ENCODE measurements at regions of chrX and their contacts with region 1.

Region 1: GRCh38 chrX:41055740-41056139 is 29.5 kb upstream of the USP9X start:
- DNase-seq: no peak
- H3K4me3 ChIP-seq: no peak overlapping the region
- H3K27ac ChIP-seq: no peak overlapping the region
- H3K4me1 ChIP-seq: no peaks in the 10 kb centered on the region
- H3K27me3 ChIP-seq: no peaks in the 10 kb centered on the region
- CTCF ChIP-seq: no peak

Region 2: DNA sequence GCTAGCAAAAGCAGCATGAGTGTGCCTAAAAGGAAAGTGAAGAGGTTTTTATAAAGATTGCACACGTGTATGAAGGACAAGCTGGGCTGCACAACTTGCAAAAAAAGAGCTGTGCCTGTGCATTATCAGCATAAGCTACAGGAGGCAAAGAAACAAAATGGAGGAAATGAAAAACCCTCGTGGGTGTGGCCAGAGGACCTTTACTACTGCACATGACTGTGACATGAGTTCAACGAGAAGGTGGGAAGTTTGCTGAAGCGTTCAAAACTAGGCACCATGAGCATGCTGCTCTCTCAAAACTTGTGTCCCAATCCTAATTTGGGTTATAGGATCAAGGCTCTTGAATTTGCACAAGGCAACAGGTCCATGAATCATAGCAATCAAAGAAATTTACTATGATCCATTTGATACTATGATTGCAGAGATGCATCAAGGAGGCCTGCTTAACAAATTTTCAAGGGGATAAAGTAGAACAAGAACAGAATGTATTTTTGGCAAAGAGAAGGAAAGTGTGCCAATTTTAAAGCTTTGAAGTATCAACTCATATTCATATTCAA is 370.3 kb before region 1 on chrX:
- CTCF ChIA-PET with region 1: no interaction called
- POLR2A ChIA-PET with region 1: no interaction called
- intact Hi-C with region 1: no loop called
- DNase-seq: no peak
- H3K4me3 ChIP-seq: no peak overlapping the region
- H3K27ac ChIP-seq: no peak overlapping the region
- H3K4me1 ChIP-seq: no peaks in the 10 kb centered on the region
- H3K27me3 ChIP-seq: no peaks in the 10 kb centered on the region
- CTCF ChIP-seq: no peak

Region 3: GRCh38 chrX:41066391-41066790 is 10.7 kb after region 1 on chrX:
- CTCF ChIA-PET with region 1: no interaction called
- POLR2A ChIA-PET with region 1: interaction called, 13 read pairs
- intact Hi-C with region 1: no loop called
- DNase-seq: no peak
- H3K4me3 ChIP-seq: no peak overlapping the region
- H3K27ac ChIP-seq: no peak overlapping the region
- H3K4me1 ChIP-seq: no peaks in the 10 kb centered on the region
- H3K27me3 ChIP-seq: no peaks in the 10 kb centered on the region
- CTCF ChIP-seq: no peak

Region 4: DNA sequence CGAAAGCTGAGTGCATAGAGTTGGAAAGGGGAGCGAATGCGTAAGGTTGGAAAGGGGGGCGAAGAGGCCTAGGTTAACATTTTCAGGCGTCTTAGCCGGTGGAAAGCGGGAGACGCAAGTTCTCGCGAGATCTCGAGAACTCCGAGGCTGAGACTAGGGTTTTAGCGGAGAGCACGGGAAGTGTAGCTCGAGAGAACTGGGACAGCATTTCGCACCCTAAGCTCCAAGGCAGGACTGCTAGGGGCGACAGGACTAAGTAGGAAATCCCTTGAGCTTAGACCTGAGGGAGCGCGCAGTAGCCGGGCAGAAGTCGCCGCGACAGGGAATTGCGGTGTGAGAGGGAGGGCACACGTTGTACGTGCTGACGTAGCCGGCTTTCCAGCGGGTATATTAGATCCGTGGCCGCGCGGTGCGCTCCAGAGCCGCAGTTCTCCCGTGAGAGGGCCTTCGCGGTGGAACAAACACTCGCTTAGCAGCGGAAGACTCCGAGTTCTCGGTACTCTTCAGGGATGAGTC is 278.1 kb after region 1 on chrX and contains the start of gene DDX3X:
- CTCF ChIA-PET with region 1: no interaction called
- POLR2A ChIA-PET with region 1: no interaction called
- intact Hi-C with region 1: no loop called
- DNase-seq: peak; percentile 93
- H3K4me3 ChIP-seq: peak within 1 kb of the TSS; percentile 81
- H3K27ac ChIP-seq: peak within 1 kb of the TSS; percentile 100
- H3K4me1 ChIP-seq: peaks cover 47% of the 10 kb centered on the region
- H3K27me3 ChIP-seq: no peaks in the 10 kb centered on the region
- CTCF ChIP-seq: 0 out of 2 replicates have a peak, but pooled peaks have one; percentile 20
- total RNA-seq, gene DDX3X: 408 and 454 TPM in 2 replicates

Region 5: DNA sequence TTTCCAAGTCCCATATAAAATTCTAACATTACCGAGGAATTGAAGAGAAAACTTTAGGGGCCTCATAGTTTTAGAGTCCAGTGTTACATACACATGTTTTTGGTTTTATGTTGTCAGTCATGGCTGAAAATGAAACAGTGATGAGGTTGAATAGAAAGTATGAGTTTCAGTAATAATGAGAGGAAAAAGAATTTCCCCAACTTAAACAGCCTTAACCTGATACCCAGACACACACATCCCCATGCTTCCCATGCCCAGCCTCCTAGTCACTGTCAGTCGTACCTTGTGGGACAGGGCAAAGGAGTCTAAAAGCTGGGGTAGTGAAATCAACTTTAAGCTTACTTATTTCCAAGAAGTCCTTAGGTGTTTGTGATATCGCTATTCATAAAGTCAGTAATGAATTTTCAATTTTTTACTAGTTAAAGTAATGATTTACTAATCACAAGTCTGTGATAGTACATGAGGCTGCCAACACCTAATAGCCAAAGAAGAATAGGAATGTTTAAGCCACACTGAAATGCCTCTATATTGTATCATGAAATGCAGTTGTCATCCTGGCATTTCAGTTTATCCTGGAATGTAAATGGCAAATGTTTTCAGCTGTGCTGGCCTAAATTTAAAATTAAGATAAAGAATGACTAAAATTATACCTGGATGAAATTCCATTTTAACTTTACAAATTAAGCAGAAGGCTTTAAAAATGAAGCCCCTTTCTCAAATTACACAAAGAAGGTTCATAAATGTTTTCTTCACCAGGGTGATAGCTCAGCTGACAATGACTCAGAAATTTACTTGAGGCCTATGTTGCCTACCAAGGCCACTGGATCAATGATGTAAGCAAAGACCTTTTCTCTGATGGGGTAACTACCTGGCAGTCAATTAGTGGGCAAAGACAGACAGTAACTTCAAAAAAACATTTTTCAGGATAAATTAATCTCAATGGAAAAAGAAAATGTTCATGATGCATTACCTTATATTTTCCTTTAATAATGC is 608.9 kb after region 1 on chrX:
- CTCF ChIA-PET with region 1: no interaction called
- POLR2A ChIA-PET with region 1: no interaction called
- intact Hi-C with region 1: no loop called
- DNase-seq: no peak
- H3K4me3 ChIP-seq: no peak overlapping the region
- H3K27ac ChIP-seq: no peak overlapping the region
- H3K4me1 ChIP-seq: peaks cover 3% of the 10 kb centered on the region
- H3K27me3 ChIP-seq: no peaks in the 10 kb centered on the region
- CTCF ChIP-seq: no peak